ENCODE measurements at regions of chr20 and their contacts with region 1.

Region 1: GRCh38 chr20:58179432-58180099 is 48.9 kb downstream of the ANKRD60 start:
- DNase-seq: peak; percentile 69 to 89
- ATAC-seq: peak; percentile 89
- H3K4me3 ChIP-seq: peak overlapping the region in 1 of 2 donors; percentile 5
- H3K27ac ChIP-seq: no peak overlapping the region
- H3K4me1 ChIP-seq: no peaks in the 10 kb centered on the region
- H3K27me3 ChIP-seq: no peaks in the 10 kb centered on the region

Region 2: GRCh38 chr20:57622579-57623377 is 556.8 kb before region 1 on chr20:
- intact Hi-C with region 1: loop called in 1 of 2 experiments (anchors 5 kb)
- DNase-seq: peak; percentile 63 to 80
- ATAC-seq: peak; percentile 48
- H3K4me3 ChIP-seq: no peak overlapping the region
- H3K27ac ChIP-seq: no peak overlapping the region
- H3K4me1 ChIP-seq: no peaks in the 10 kb centered on the region
- H3K27me3 ChIP-seq: no peaks in the 10 kb centered on the region

Region 3: DNA sequence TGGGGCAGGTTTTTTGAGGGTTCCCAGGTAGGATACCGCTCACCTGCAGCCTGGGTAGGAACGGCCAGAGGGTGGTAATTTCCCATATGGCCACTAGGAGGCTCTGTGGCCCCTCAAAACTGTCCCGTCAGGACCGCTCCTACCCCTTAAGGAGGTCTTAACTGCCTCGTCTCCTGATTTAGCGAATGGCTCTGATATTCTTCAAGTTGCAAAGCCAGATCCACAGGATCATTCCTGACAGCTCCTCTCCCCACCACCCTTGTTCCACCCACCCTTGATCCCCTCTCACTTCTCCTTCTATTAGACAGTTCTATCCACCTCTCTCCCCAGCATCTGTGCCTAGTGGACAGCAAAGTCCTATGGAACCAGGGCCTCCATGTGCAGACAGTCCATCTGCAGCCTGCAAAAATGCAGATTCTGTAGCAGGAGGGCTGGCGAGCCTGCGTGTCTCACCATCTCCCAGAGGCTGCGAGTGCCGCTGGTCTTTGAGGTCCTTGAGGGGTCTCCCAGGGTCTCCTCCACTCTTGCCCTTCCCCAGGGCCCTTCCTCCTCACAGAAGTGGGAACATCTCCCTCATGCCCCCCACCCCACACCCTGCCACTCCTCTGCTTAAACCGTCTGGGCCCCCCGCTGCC is 525.1 kb before region 1 on chr20:
- intact Hi-C with region 1: loop called (anchors 2 kb)
- DNase-seq: peak in 1 of 2 donors; percentile 73
- ATAC-seq: peak; percentile 81
- H3K4me3 ChIP-seq: no peak overlapping the region
- H3K27ac ChIP-seq: no peak overlapping the region
- H3K4me1 ChIP-seq: no peaks in the 10 kb centered on the region
- H3K27me3 ChIP-seq: no peaks in the 10 kb centered on the region

Region 4: DNA sequence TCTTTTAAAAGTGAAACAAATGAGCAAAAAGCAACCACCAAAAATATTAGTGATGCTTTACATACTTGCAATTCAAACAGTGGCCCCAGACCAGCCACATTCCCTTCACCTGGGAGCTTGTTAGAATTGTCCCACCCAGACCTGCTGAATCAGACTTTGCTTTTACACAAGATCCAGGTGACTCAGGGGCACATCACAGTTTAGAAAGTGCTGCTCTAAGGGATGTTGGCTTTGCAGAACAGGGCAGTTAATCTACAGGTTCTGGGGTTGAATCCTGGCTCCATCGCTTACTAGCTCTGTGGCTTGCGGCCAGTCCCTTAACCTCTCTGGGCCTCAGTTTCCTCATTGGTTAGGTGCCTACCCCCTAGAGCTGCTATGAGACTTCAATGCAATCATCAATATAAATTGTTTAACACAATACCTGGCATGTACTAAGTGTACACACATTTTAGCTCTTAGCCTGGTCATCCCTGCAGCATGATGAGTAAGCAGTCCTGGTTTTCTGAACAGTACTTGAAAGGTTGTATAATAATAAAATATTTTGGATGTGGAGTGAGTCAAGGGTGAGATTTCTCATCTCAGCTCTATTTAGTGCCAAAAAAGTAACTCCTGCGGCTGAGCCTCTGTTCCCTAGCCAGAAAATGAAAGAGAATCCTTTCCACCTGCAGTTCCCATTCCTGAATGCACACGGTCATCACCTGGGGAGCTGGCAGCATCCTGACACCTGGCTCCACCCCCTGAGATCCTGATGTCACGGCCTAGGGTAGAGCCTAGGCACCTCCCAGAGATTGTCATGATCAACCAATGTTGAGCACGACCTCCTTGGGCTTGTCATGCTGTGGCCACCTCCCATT is 113.8 kb before region 1 on chr20:
- intact Hi-C with region 1: no loop called
- DNase-seq: no peak
- ATAC-seq: no peak
- H3K4me3 ChIP-seq: no peak overlapping the region
- H3K27ac ChIP-seq: no peak overlapping the region
- H3K4me1 ChIP-seq: no peaks in the 10 kb centered on the region
- H3K27me3 ChIP-seq: no peaks in the 10 kb centered on the region

Region 5: GRCh38 chr20:58087193-58087858 is 92.2 kb before region 1 on chr20:
- intact Hi-C with region 1: loop called in 1 of 2 experiments (anchors 5 kb)
- DNase-seq: no peak
- ATAC-seq: no peak
- H3K4me3 ChIP-seq: no peak overlapping the region
- H3K27ac ChIP-seq: no peak overlapping the region
- H3K4me1 ChIP-seq: no peaks in the 10 kb centered on the region
- H3K27me3 ChIP-seq: no peaks in the 10 kb centered on the region

Region 6: GRCh38 chr20:58112017-58112781 is 67.4 kb before region 1 on chr20:
- intact Hi-C with region 1: loop called in 1 of 2 experiments (anchors 10 kb)
- DNase-seq: no peak
- ATAC-seq: no peak
- H3K4me3 ChIP-seq: no peak overlapping the region
- H3K27ac ChIP-seq: peak overlapping the region in 1 of 2 donors; percentile 63
- H3K4me1 ChIP-seq: peaks cover 2 to 3% of the 10 kb centered on the region in 2 donors
- H3K27me3 ChIP-seq: no peaks in the 10 kb centered on the region

Region 7: GRCh38 chr20:58131551-58132142 is 47.9 kb before region 1 on chr20:
- intact Hi-C with region 1: loop called in 1 of 2 experiments (anchors 5 kb)
- DNase-seq: no peak
- ATAC-seq: no peak
- H3K4me3 ChIP-seq: no peak overlapping the region
- H3K27ac ChIP-seq: peak overlapping the region in 1 of 2 donors; percentile 68
- H3K4me1 ChIP-seq: peaks cover 2 to 10% of the 10 kb centered on the region in 2 donors
- H3K27me3 ChIP-seq: no peaks in the 10 kb centered on the region